Testis (tissue), 5 donors: ENCODE measurements at regions of chr16 and their contacts with region 1.

Region 1: GRCh38 chr16:84484579-84485254 is 19.7 kb downstream of the MEAK7 start:
- DNase-seq: peak; percentile 84
- H3K4me3 ChIP-seq: no peak overlapping the region
- H3K27ac ChIP-seq: no peak overlapping the region
- H3K4me1 ChIP-seq: no peaks in the 10 kb centered on the region
- H3K27me3 ChIP-seq: no peaks in the 10 kb centered on the region
- CTCF ChIP-seq: peak; percentile 69 to 84 (median 81)
- POLR2A ChIP-seq: no peak

Region 2: GRCh38 chr16:84277237-84277823 is 207.4 kb before region 1 on chr16:
- intact Hi-C with region 1: loop called (anchors 10 kb)
- DNase-seq: peak; percentile 83
- H3K4me3 ChIP-seq: no peak overlapping the region
- H3K27ac ChIP-seq: no peak overlapping the region
- H3K4me1 ChIP-seq: no peaks in the 10 kb centered on the region
- H3K27me3 ChIP-seq: no peaks in the 10 kb centered on the region
- CTCF ChIP-seq: peak; percentile 77 to 89 (median 77)
- POLR2A ChIP-seq: no peak

Region 3: GRCh38 chr16:84340325-84341040 is 144.2 kb before region 1 on chr16:
- intact Hi-C with region 1: no loop called
- DNase-seq: no peak
- H3K4me3 ChIP-seq: no peak overlapping the region
- H3K27ac ChIP-seq: no peak overlapping the region
- H3K4me1 ChIP-seq: no peaks in the 10 kb centered on the region
- H3K27me3 ChIP-seq: no peaks in the 10 kb centered on the region
- CTCF ChIP-seq: no peak
- POLR2A ChIP-seq: no peak

Region 4: DNA sequence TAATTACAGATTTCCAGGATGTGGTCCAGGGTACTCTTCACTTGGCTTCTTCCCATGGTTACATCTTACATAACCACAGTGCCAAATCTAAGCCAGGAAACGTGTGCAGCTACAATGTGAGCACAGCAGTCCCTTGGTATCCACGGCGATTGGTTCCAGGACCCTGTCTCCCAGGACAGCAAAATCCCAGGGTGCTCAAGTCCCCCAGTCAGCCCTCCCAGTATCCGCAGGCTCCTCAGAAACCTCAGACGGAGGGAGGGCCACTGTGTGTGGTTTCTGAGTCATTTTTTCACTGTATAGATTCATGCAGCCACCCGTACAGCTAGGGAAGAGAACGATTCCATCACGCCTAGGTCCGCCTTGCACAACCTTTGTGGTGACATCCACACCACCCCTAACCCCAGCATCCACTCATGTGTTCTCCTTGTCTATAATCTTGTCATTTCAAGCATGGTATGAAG is 127.5 kb before region 1 on chr16:
- intact Hi-C with region 1: no loop called
- DNase-seq: no peak
- H3K4me3 ChIP-seq: no peak overlapping the region
- H3K27ac ChIP-seq: no peak overlapping the region
- H3K4me1 ChIP-seq: no peaks in the 10 kb centered on the region
- H3K27me3 ChIP-seq: no peaks in the 10 kb centered on the region
- CTCF ChIP-seq: no peak
- POLR2A ChIP-seq: no peak